ENCODE measurements at regions of chr17 and their contacts with region 1.

Region 1: DNA sequence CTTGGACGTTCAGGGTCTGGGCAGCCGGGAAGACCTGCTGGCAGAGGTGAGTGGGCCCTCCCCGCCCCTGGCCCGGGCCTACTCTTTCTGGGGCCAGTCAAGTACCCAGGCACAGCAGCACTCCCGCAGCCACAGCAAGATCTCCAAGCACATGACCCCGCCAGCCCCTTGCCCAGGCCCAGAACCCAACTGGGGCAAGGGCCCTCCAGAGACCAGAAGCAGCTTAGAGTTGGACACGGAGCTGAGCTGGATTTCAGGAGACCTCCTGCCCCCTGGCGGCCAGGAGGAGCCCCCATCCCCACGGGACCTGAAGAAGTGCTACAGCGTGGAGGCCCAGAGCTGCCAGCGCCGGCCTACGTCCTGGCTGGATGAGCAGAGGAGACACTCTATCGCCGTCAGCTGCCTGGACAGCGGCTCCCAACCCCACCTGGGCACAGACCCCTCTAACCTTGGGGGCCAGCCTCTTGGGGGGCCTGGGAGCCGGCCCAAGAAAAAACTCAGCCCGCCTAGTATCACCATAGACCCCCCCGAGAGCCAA is 8.6 kb upstream of the ABCC3 start:
- DNase-seq: peak; percentile 81
- ATAC-seq: peak; percentile 82
- H3K4me3 Mint-ChIP-seq: no peak overlapping the region
- H3K27ac Mint-ChIP-seq: no peak overlapping the region
- H3K4me1 Mint-ChIP-seq: peaks cover 2% of the 10 kb centered on the region
- H3K27me3 Mint-ChIP-seq: peaks cover 30% of the 10 kb centered on the region
- CTCF ChIP-seq: peak; percentile 75

Region 2: GRCh38 chr17:50523208-50523607 is 102.9 kb before region 1 on chr17:
- CTCF ChIA-PET with region 1: no interaction called
- POLR2A ChIA-PET with region 1: no interaction called
- intact Hi-C with region 1: no loop called
- DNase-seq: no peak
- ATAC-seq: no peak
- H3K4me3 Mint-ChIP-seq: no peak overlapping the region
- H3K27ac Mint-ChIP-seq: no peak overlapping the region
- H3K4me1 Mint-ChIP-seq: no peaks in the 10 kb centered on the region
- H3K27me3 Mint-ChIP-seq: no peaks in the 10 kb centered on the region
- CTCF ChIP-seq: no peak

Region 3: DNA sequence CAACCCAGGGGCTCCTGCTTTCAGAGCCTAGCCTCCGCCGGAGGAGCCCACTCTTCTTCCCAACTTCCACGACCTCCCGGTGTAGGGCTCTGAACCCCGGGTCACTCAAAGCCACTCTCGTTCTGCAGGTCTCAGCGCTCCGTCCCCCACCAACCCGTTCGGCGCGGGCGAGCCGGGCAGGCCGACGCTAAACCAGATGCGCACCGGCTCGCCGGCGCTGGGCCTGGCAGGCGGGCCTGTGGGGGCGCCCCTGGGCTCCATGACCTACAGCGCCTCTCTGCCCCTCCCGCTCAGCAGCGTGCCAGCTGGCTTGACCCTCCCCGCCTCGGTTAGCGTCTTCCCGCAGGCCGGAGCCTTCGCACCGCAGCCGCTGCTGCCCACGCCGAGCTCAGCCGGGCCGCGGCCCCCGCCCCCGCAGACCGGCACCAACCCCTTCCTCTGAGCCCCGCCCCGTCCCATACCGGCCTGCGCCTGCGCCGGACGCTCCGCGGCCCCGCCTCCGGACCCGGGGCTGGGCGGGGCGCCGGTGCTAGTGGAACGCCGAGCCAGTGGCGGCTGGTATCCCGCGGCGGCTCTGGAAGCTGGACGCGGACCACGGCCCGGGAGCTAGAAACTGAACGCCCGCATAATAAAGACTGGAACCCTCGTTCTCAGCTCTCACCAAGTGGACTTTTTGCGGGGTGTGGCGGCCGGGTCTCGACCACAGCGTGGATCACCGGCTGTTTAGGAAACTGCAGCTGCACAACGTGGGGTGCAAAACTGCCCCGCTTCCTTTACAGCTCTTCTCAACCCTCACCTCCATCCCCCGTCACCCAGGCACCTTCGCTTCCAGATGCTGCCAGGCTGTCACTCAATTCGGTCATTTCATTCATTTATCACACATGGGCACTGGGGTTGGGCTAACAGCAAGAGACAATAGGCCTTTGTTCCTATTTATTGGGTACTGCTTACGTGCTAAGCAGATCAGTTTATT is 84.1 kb before region 1 on chr17:
- CTCF ChIA-PET with region 1: interaction called, 17 read pairs
- POLR2A ChIA-PET with region 1: no interaction called
- intact Hi-C with region 1: loop called (anchors 2 kb)
- DNase-seq: peak; percentile 83
- ATAC-seq: peak; percentile 87
- H3K4me3 Mint-ChIP-seq: peak overlapping the region; percentile 53
- H3K27ac Mint-ChIP-seq: peak overlapping the region; percentile 34
- H3K4me1 Mint-ChIP-seq: peaks cover 11% of the 10 kb centered on the region
- H3K27me3 Mint-ChIP-seq: peaks cover 2% of the 10 kb centered on the region
- CTCF ChIP-seq: peak; percentile 45

Region 4: GRCh38 chr17:50560931-50561745 is 65.0 kb before region 1 on chr17:
- CTCF ChIA-PET with region 1: interaction called, 11 read pairs
- POLR2A ChIA-PET with region 1: no interaction called
- intact Hi-C with region 1: no loop called
- DNase-seq: peak; percentile 24
- ATAC-seq: peak; percentile 15
- H3K4me3 Mint-ChIP-seq: no peak overlapping the region
- H3K27ac Mint-ChIP-seq: no peak overlapping the region
- H3K4me1 Mint-ChIP-seq: peaks cover 19% of the 10 kb centered on the region
- H3K27me3 Mint-ChIP-seq: peaks cover 58% of the 10 kb centered on the region
- CTCF ChIP-seq: no peak

Region 5: GRCh38 chr17:50638851-50639767 is 13.0 kb after region 1 on chr17:
- CTCF ChIA-PET with region 1: interaction called, 67 read pairs
- POLR2A ChIA-PET with region 1: no interaction called
- intact Hi-C with region 1: no loop called
- DNase-seq: no peak
- ATAC-seq: no peak
- H3K4me3 Mint-ChIP-seq: no peak overlapping the region
- H3K27ac Mint-ChIP-seq: no peak overlapping the region
- H3K4me1 Mint-ChIP-seq: no peaks in the 10 kb centered on the region
- H3K27me3 Mint-ChIP-seq: peaks cover 23% of the 10 kb centered on the region
- CTCF ChIP-seq: no peak

Region 6: DNA sequence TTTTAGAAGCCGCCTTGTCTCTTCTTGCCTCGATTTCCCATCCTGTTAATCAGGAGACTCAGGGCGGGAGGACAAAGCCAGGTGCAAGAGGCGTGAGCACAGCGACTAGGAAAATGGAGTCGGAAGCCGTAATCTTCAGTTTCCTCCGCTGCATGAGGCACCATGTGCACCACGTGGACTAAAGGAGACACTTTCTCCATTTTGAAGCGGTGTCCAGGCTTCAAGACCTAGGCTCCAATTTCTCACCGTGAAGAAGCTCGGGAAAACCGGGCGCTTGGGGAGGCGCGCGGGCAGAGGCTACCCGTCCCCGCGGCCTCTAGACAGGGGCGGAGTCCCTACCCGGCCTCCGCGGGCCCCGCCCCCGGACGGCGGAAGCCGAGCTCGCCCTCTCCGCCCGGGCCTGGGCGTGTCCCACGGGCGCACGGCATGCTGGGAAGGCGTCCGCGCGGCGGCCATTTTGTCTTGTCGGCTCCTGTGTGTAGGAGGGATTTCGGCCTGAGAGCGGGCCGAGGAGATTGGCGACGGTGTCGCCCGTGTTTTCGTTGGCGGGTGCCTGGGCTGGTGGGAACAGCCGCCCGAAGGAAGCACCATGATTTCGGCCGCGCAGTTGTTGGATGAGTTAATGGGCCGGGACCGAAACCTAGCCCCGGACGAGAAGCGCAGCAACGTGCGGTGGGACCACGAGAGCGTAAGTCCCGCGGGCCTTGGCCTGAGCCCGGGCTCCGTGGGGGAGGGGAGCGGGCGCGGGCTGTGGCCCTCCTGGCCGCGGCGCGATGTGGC is 93.2 kb after region 1 on chr17 and contains the start of gene LUC7L3:
- CTCF ChIA-PET with region 1: no interaction called
- POLR2A ChIA-PET with region 1: no interaction called
- intact Hi-C with region 1: no loop called
- DNase-seq: peak; percentile 94
- ATAC-seq: peak; percentile 94
- H3K4me3 Mint-ChIP-seq: peak within 1 kb of the TSS; percentile 85
- H3K27ac Mint-ChIP-seq: peak within 1 kb of the TSS; percentile 99
- H3K4me1 Mint-ChIP-seq: peaks cover 19% of the 10 kb centered on the region
- H3K27me3 Mint-ChIP-seq: no peaks in the 10 kb centered on the region
- CTCF ChIP-seq: no peak
- total RNA-seq, gene LUC7L3: 148 to 160 TPM